Psoas muscle (tissue), 8 donors: ENCODE measurements at regions of chr17 and their contacts with region 1.

Region 1: DNA sequence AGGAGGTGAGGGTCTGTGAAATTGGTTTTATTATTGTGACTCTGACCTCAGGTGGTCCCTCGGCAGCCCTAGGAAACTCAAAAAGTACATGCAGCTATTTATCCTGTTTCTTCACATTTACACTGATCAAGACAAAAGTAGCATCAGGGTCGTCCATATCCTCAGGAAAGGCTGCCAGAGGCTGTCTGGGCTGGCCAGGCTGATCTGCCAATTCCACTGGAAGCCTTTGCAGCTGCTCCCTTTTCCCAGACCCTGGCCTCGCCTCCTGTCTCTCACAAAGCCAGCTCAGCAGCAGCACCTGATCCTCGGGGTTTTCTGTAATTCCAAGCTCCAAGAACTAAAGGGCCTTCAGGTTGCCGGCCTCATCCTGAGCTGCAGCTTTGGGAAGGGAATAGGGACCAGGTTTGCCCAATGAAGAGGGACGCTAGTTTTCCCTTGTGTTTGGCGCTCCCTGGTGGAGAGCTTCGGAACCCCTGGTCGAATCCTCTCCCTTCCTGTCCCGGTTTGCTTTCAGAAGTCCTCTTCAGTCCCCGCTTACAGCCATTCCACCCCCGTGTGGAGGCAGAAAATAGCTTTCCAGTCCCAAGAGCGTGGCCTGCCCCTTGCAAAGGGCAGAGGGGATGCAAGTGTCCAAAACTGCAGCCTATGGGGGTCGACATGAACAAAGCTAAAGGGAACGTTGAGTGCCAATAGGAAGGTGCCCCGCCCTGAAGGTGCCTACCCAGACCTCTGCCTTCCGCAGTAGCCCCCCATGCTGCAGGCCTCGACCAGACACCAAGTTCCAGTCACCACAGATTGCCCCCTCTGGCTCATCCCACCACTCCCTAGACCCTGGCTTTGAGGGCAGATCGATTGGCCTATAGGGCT is 13.4 kb downstream of the MFSD6L start:
- DNase-seq: peak; percentile 60 to 79
- ATAC-seq: peak in 2 of 4 donors; percentile 49
- H3K4me3 ChIP-seq: no peak overlapping the region
- H3K27ac ChIP-seq: no peak overlapping the region
- H3K4me1 ChIP-seq: no peaks in the 10 kb centered on the region
- H3K27me3 ChIP-seq: no peaks in the 10 kb centered on the region
- CTCF ChIP-seq: peak; percentile 66

Region 2: DNA sequence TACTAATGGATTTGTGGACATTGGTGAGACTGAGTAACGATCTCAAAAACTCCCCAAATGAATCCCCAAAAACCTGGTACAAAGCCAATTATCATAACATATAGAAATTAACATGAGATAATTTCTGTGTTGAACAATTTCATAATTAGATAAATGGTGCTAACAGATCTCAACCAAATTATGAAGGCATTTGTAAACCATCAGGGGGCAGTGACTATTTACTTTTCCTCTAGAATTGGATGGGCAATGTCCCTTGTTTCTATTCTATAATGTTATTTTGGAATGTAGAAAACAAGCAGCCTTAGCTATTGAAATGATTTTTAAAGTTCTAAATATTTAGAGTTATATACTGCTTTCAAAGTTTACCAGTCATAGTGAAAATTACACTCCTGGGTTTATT is 213.0 kb before region 1 on chr17:
- intact Hi-C with region 1: loop called in 1 of 2 experiments (anchors 10 kb)
- DNase-seq: no peak
- ATAC-seq: no peak
- H3K4me3 ChIP-seq: no peak overlapping the region
- H3K27ac ChIP-seq: no peak overlapping the region
- H3K4me1 ChIP-seq: no peaks in the 10 kb centered on the region
- H3K27me3 ChIP-seq: no peaks in the 10 kb centered on the region
- CTCF ChIP-seq: peak; percentile 23

Region 3: DNA sequence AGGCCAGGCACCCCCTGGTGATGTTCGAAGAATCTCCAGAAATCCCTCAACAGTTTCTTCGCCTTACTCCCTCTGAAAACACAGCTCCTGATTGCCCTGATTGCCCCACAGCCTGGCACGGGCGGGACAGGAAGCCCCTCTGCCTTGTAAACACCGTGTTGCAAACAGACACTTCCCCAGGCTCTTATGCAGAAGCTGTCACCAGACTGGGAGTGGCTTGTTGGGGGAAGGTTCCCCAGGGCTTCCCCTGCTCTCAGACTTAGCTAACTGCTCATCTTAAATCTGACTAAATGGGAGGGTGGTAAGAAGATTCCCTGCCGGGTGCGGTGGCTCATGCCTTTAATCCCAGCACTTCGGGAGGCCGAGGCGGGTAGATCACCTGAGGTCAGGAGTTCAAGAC is 168.6 kb after region 1 on chr17:
- intact Hi-C with region 1: no loop called
- DNase-seq: peak; percentile 54 to 75
- ATAC-seq: peak in 1 of 4 donors; percentile 31
- H3K4me3 ChIP-seq: no peak overlapping the region
- H3K27ac ChIP-seq: no peak overlapping the region
- H3K4me1 ChIP-seq: no peaks in the 10 kb centered on the region
- H3K27me3 ChIP-seq: peaks cover 0 to 9% (median 2%) of the 10 kb centered on the region in 3 donors
- CTCF ChIP-seq: no peak